Activated CD4-positive, alpha-beta T cell treated with anti-CD3 and anti-CD28 coated beads for 36 hours (primary cell): ENCODE measurements at regions of chr9 and their contacts with region 1.

Region 1: DNA sequence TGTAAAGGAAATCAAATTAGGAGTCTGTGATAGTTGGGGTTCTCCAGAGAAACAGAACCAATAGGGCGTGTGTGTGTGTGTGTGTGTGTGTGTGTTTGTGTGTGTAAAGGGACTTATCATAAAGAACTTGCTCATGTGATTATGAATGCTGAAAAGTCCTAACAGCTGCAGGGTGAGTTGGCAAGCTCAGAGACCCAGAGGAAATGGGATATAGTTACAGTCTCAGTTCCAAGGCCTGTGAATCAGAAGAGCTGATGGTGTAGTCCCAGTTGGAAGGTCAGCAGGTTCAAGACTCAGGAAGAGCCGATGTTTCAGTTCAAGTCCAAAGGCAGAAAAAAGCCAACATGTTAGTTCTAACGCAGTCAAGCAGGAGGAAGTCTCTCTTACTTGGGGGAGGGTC is 214.2 kb downstream of the ELAVL2 start:
- DNase-seq: no peak
- ATAC-seq: no peak
- H3K4me3 Mint-ChIP-seq: no peak overlapping the region
- H3K27ac Mint-ChIP-seq: no peak overlapping the region
- H3K4me1 Mint-ChIP-seq: no peaks in the 10 kb centered on the region
- H3K27me3 Mint-ChIP-seq: no peaks in the 10 kb centered on the region

Region 2: DNA sequence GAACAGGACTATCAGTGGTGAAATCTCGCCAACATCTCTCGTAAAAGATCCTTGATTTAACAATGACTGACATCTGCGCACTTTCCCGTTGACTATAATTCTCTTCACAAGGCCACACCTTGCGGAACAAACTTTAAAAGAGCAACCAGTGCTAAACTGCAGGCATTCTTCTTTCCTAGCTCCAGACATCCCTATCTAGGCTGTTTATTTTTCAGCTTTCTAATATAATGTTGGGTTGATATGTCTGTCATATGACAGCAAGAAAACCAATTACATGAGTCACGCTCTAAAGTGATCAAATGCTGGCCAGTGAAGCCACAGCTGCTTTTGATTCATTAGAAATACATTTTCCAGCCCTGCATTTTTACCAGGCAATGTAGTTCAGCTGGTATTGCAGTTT is 51.7 kb after region 1 on chr9:
- CTCF ChIA-PET with region 1: no interaction called
- POLR2A ChIA-PET with region 1: no interaction called
- intact Hi-C with region 1: loop called in 1 of 2 experiments (anchors 5 kb)
- DNase-seq: no peak
- ATAC-seq: no peak
- H3K4me3 Mint-ChIP-seq: no peak overlapping the region
- H3K27ac Mint-ChIP-seq: no peak overlapping the region
- H3K4me1 Mint-ChIP-seq: no peaks in the 10 kb centered on the region
- H3K27me3 Mint-ChIP-seq: no peaks in the 10 kb centered on the region